Activated CD4-positive, alpha-beta T cell treated with anti-CD3 and anti-CD28 coated beads for 36 hours (primary cell): ENCODE measurements at regions of chr3 and their contacts with region 1.

Region 1: GRCh38 chr3:49689046-49689907 is at the starts of genes MST1 and RNF123:
- DNase-seq: peak; percentile 95
- ATAC-seq: peak; percentile 74
- H3K4me3 Mint-ChIP-seq: peak within 1 kb of the TSS; percentile 90
- H3K27ac Mint-ChIP-seq: peak within 1 kb of the TSS; percentile 90
- H3K4me1 Mint-ChIP-seq: peaks cover 30% of the 10 kb centered on the region
- H3K27me3 Mint-ChIP-seq: no peaks in the 10 kb centered on the region
- total RNA-seq, gene MST1: 8.7 to 9.7 TPM
- total RNA-seq, gene RNF123: 25.2 to 32.7 TPM

Region 2: DNA sequence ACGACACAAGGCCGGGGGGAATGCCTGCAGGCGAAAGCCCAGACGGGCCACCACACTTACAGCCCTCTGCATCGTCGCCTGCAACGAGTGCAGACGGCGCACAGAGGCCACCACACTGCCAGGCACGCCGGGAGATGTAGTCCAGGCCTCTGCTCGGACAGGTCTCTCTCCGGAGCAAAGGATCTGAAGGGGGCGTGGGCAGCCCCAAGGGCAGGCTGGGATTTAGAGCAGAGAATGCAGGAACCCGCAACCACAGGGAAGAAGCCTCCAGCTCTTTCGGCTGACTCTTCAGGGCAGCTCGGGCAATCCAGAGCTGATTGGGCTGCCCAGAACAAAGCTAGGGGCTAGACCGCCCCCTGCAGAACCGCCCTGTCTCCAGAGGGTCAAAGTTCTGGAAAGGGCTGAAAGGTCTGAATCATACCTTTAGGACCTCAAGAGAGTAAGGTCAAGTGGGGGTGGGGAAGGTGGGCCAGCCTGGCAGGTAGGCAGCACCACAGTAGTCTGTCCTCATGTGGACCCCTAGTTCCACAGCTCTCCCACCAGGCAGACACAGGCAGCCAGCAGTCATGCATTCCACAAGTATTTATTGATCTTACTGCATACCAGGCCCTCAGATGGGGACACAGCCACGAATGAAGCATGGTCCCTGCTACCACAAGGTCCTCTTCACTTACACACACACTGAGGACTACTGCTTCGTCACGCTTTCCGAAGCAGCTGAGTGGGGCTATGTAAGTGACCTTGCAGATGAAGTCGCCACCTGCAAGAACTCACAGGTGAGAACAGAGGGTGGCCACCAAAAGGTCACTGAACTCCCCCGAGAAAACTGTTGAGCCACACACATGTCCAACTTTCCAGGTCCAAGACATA is 266.7 kb before region 1 on chr3 and contains the start of gene AMT:
- CTCF ChIA-PET with region 1: no interaction called
- POLR2A ChIA-PET with region 1: no interaction called
- intact Hi-C with region 1: no loop called
- DNase-seq: no peak
- ATAC-seq: no peak
- H3K4me3 Mint-ChIP-seq: no peak within 1 kb of the TSS
- H3K27ac Mint-ChIP-seq: peak within 1 kb of the TSS; percentile 31
- H3K4me1 Mint-ChIP-seq: peaks cover 39% of the 10 kb centered on the region
- H3K27me3 Mint-ChIP-seq: no peaks in the 10 kb centered on the region
- total RNA-seq, gene AMT: 3.6 to 4.1 TPM

Region 3: GRCh38 chr3:49553692-49554632 is 135.3 kb before region 1 on chr3 and contains the start of gene BSN:
- CTCF ChIA-PET with region 1: no interaction called
- POLR2A ChIA-PET with region 1: no interaction called
- intact Hi-C with region 1: loop called in 1 of 2 experiments (anchors 1 kb)
- DNase-seq: peak; percentile 95
- ATAC-seq: peak; percentile 92
- H3K4me3 Mint-ChIP-seq: peak within 1 kb of the TSS; percentile 72
- H3K27ac Mint-ChIP-seq: peak within 1 kb of the TSS; percentile 24
- H3K4me1 Mint-ChIP-seq: peaks cover 11% of the 10 kb centered on the region
- H3K27me3 Mint-ChIP-seq: peaks cover 34% of the 10 kb centered on the region
- total RNA-seq, gene BSN: 0.09 to 0.11 TPM